Activated T-helper 2 cell treated with anti-CD3 and anti-CD28 coated beads, Interferon-gamma antibody, Interleukin-2, Interleukin-4, amounts not matched to agents 10 μg/mL and 5 μg/mL and 100 μg/mL, durations not matched to agents 14 hours and 24 hours and 36 hours (primary cell): ENCODE measurements at regions of chr17 and their contacts with region 1.

Region 1: GRCh38 chr17:70137451-70138230 is 31.7 kb upstream of the KCNJ2 start:
- DNase-seq: peak; percentile 41
- H3K4me3 Mint-ChIP-seq: no peak overlapping the region
- H3K27ac Mint-ChIP-seq: peak overlapping the region; percentile 61
- H3K4me1 Mint-ChIP-seq: peaks cover 23% of the 10 kb centered on the region
- H3K27me3 Mint-ChIP-seq: peaks cover 5% of the 10 kb centered on the region

Region 2: GRCh38 chr17:69709441-69709840 is 428.2 kb before region 1 on chr17:
- intact Hi-C with region 1: loop called (anchors 1 kb)
- DNase-seq: no peak
- H3K4me3 Mint-ChIP-seq: peak overlapping the region; percentile 17
- H3K27ac Mint-ChIP-seq: no peak overlapping the region
- H3K4me1 Mint-ChIP-seq: peaks cover 4% of the 10 kb centered on the region
- H3K27me3 Mint-ChIP-seq: no peaks in the 10 kb centered on the region

Region 3: GRCh38 chr17:69761751-69762321 is 375.8 kb before region 1 on chr17:
- intact Hi-C with region 1: loop called (anchors 2 kb)
- DNase-seq: no peak
- H3K4me3 Mint-ChIP-seq: no peak overlapping the region
- H3K27ac Mint-ChIP-seq: no peak overlapping the region
- H3K4me1 Mint-ChIP-seq: peaks cover 29% of the 10 kb centered on the region
- H3K27me3 Mint-ChIP-seq: no peaks in the 10 kb centered on the region

Region 4: DNA sequence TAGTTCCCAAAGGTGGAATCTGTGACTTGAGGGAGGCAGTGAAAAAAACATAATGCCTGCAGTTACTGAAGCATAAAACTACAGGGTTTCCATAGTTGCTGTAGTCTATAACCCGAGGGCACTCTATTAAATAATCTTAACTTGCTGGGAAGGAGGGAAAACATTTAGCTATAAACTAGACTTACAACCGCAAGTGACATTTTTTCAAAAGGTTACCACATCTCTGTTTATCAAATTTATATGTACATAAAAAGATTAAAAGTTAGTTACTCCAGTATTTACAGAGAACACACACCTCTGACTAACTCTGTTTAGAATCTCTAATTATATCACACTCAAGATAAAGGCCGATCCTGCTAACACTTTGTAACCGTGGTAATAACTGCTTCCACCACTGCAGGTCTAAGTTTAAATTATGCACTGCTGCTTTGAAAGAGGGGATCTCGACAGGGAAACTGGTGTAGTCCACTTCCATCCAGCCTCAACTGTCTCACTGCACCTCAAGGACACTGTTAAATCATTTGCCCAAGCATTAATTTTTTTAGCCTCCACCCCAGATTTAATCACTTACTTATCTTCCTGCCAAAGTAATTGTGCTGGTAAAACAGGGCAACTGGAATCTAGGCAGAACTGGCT is 48.0 kb before region 1 on chr17:
- intact Hi-C with region 1: loop called (anchors 5 kb)
- DNase-seq: no peak
- H3K4me3 Mint-ChIP-seq: no peak overlapping the region
- H3K27ac Mint-ChIP-seq: no peak overlapping the region
- H3K4me1 Mint-ChIP-seq: peaks cover 8% of the 10 kb centered on the region
- H3K27me3 Mint-ChIP-seq: no peaks in the 10 kb centered on the region

Region 5: GRCh38 chr17:70168977-70169708 is 31.5 kb after region 1 on chr17 and contains the start of gene KCNJ2:
- intact Hi-C with region 1: loop called (anchors 2 kb)
- DNase-seq: peak; percentile 67
- H3K4me3 Mint-ChIP-seq: peak within 1 kb of the TSS; percentile 81
- H3K27ac Mint-ChIP-seq: no peak within 1 kb of the TSS
- H3K4me1 Mint-ChIP-seq: peaks cover 11% of the 10 kb centered on the region
- H3K27me3 Mint-ChIP-seq: peaks cover 58% of the 10 kb centered on the region
- total RNA-seq, gene KCNJ2: 0.11 TPM in 1 of 2 replicates, not detected in the other

Region 6: GRCh38 chr17:70208825-70209555 is 71.3 kb after region 1 on chr17:
- intact Hi-C with region 1: no loop called
- DNase-seq: no peak
- H3K4me3 Mint-ChIP-seq: no peak overlapping the region
- H3K27ac Mint-ChIP-seq: no peak overlapping the region
- H3K4me1 Mint-ChIP-seq: no peaks in the 10 kb centered on the region
- H3K27me3 Mint-ChIP-seq: no peaks in the 10 kb centered on the region

Region 7: GRCh38 chr17:70288540-70289290 is 151.1 kb after region 1 on chr17:
- intact Hi-C with region 1: no loop called
- DNase-seq: no peak
- H3K4me3 Mint-ChIP-seq: no peak overlapping the region
- H3K27ac Mint-ChIP-seq: no peak overlapping the region
- H3K4me1 Mint-ChIP-seq: no peaks in the 10 kb centered on the region
- H3K27me3 Mint-ChIP-seq: no peaks in the 10 kb centered on the region